PC-3 (cell line): ENCODE measurements at regions of chr1 and their contacts with region 1.

Region 1: GRCh38 chr1:223683586-223684487 is 18.3 kb upstream of the CAPN8 start:
- DNase-seq: peak; percentile 90
- ATAC-seq: peak; percentile 89
- H3K4me3 ChIP-seq: no peak overlapping the region
- H3K27ac ChIP-seq: no peak overlapping the region
- H3K4me1 ChIP-seq: peaks cover 3% of the 10 kb centered on the region; the same call in 1 of the 2 replicates
- H3K27me3 ChIP-seq: no peaks in the 10 kb centered on the region
- CTCF ChIP-seq: peak; percentile 94

Region 2: DNA sequence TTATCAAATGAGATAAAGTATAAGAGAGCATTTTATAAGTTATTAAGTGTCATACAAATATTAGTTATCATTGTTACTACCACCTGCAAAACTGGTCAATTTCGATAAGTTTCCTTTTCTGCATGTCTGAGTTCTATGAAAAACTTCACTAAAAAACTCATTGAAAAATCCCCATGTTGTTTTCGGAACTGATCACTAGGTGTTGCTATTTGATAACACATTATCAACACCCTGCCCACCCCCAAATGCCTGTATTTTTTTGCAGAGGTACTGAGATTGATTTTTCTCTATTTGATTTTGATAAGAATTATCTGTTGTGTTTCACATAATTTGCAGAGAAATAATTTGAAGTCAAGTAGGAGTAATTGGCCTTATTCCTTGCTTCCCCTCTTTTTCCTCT is 891.1 kb before region 1 on chr1:
- CTCF ChIA-PET with region 1: no interaction called
- POLR2A ChIA-PET with region 1: no interaction called
- intact Hi-C with region 1: loop called (anchors 10 kb)
- DNase-seq: peak; percentile 74
- ATAC-seq: peak; percentile 38; the same call in 1 of the 2 replicates
- H3K4me3 ChIP-seq: no peak overlapping the region
- H3K27ac ChIP-seq: no peak overlapping the region
- H3K4me1 ChIP-seq: no peaks in the 10 kb centered on the region
- H3K27me3 ChIP-seq: no peaks in the 10 kb centered on the region
- CTCF ChIP-seq: peak; percentile 95

Region 3: DNA sequence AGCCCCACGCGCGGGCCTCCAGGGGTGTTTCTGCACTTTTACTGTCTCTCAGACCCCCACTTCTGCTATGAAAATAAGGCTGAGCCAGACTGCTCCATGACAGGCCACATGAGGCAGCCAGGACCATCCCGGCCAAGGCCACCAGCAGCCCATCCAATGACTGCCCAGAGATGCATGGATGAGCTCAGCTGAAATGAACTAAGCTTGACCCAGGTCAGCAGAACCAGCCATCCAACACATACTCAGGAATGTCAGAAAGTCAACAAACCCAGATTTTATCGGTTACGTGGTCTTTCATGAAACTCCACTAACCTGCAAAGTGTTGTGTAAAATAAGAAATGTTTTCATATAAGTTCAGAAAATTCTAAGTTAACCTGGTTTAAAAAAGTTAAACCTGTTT is 239.4 kb before region 1 on chr1:
- CTCF ChIA-PET with region 1: no interaction called
- POLR2A ChIA-PET with region 1: no interaction called
- intact Hi-C with region 1: no loop called
- DNase-seq: peak; percentile 34
- ATAC-seq: no peak
- H3K4me3 ChIP-seq: no peak overlapping the region
- H3K27ac ChIP-seq: no peak overlapping the region
- H3K4me1 ChIP-seq: no peaks in the 10 kb centered on the region
- H3K27me3 ChIP-seq: peaks cover 18% of the 10 kb centered on the region; the same call in 1 of the 2 replicates
- CTCF ChIP-seq: no peak

Region 4: DNA sequence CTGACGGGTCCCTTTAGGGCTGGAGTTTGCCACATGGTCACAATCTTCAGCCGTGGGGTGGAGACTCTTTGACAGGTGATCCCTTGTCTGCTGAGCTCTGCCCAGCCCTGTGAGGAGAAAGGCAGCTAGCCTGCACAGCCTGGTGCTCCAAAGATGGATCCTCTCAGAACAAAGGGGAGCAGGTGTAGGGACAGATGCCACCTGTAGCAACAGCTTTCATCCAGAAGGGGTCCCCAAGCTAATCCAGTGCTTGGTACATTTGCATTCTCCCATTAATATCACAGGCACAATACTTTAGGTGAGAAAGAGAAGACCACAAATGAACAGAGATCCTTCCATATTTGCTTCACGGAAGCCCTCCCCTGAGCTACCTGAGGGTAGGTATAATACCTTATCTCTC is 197.5 kb before region 1 on chr1:
- CTCF ChIA-PET with region 1: no interaction called
- POLR2A ChIA-PET with region 1: no interaction called
- intact Hi-C with region 1: loop called (anchors 2 kb)
- DNase-seq: peak; percentile 20
- ATAC-seq: peak; percentile 55
- H3K4me3 ChIP-seq: no peak overlapping the region
- H3K27ac ChIP-seq: no peak overlapping the region
- H3K4me1 ChIP-seq: no peaks in the 10 kb centered on the region
- H3K27me3 ChIP-seq: peaks cover 39% of the 10 kb centered on the region
- CTCF ChIP-seq: peak; percentile 50

Region 5: GRCh38 chr1:223556414-223557129 is 127.3 kb before region 1 on chr1:
- CTCF ChIA-PET with region 1: interaction called, 20 read pairs
- POLR2A ChIA-PET with region 1: no interaction called
- intact Hi-C with region 1: no loop called
- DNase-seq: peak; percentile 90
- ATAC-seq: peak; percentile 97
- H3K4me3 ChIP-seq: no peak overlapping the region
- H3K27ac ChIP-seq: no peak overlapping the region
- H3K4me1 ChIP-seq: no peaks in the 10 kb centered on the region
- H3K27me3 ChIP-seq: no peaks in the 10 kb centered on the region
- CTCF ChIP-seq: peak; percentile 98

Region 6: GRCh38 chr1:223654083-223654482 is 29.8 kb before region 1 on chr1:
- CTCF ChIA-PET with region 1: interaction called, 4 read pairs
- POLR2A ChIA-PET with region 1: no interaction called
- intact Hi-C with region 1: loop called (anchors 1 kb)
- DNase-seq: peak; percentile 85
- ATAC-seq: peak; percentile 71
- H3K4me3 ChIP-seq: peak overlapping the region; percentile 12; the same call in 1 of the 2 replicates
- H3K27ac ChIP-seq: peak overlapping the region; percentile 86
- H3K4me1 ChIP-seq: peaks cover 47% of the 10 kb centered on the region
- H3K27me3 ChIP-seq: no peaks in the 10 kb centered on the region
- CTCF ChIP-seq: 0 out of 2 replicates have a peak, but pooled peaks have one; percentile 19

Region 7: DNA sequence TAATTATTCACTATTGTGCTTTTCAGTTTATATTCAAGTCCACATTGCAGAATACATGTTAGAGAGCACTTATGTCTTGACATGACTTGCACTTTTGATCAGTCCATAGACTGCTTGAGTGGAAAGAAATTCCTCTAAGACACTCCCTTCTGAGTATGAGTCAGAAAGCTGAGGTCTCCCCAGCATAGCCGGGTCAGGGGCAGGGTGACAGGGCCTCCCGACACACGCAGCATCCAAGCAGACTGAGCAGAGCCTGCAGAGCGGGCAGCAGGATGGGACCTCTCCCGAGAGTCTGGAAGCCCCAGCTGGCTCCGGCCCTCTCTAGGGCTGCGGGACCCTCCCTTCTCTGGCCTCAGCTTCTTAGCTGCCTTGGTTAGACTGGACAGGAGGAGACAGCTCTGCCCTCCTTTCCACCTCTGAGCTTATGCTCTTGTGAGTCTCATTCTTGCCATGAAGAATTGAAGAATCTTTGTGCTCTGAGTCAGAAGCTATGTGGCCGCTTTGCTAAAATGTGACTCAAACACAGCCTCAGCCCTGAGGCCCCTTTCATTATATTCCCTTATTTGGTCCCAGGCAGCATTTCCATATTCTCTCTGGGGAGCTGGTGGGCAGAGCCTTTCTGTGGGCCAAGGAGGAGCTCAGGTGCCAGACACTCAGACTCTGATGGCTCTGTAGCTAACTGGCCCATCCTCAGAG is 17.3 kb after region 1 on chr1:
- CTCF ChIA-PET with region 1: no interaction called
- POLR2A ChIA-PET with region 1: no interaction called
- intact Hi-C with region 1: no loop called
- DNase-seq: peak; percentile 99
- ATAC-seq: peak; percentile 76
- H3K4me3 ChIP-seq: peak overlapping the region; percentile 60
- H3K27ac ChIP-seq: peak overlapping the region; percentile 97
- H3K4me1 ChIP-seq: peaks cover 73% of the 10 kb centered on the region
- H3K27me3 ChIP-seq: no peaks in the 10 kb centered on the region
- CTCF ChIP-seq: no peak

Region 8: GRCh38 chr1:223870617-223871574 is 187.1 kb after region 1 on chr1:
- CTCF ChIA-PET with region 1: no interaction called
- POLR2A ChIA-PET with region 1: no interaction called
- intact Hi-C with region 1: no loop called
- DNase-seq: no peak
- ATAC-seq: no peak
- H3K4me3 ChIP-seq: no peak overlapping the region
- H3K27ac ChIP-seq: no peak overlapping the region
- H3K4me1 ChIP-seq: peaks cover 15% of the 10 kb centered on the region
- H3K27me3 ChIP-seq: no peaks in the 10 kb centered on the region
- CTCF ChIP-seq: no peak